ENCODE measurements at regions of chr10 and their contacts with region 1.

Region 1: DNA sequence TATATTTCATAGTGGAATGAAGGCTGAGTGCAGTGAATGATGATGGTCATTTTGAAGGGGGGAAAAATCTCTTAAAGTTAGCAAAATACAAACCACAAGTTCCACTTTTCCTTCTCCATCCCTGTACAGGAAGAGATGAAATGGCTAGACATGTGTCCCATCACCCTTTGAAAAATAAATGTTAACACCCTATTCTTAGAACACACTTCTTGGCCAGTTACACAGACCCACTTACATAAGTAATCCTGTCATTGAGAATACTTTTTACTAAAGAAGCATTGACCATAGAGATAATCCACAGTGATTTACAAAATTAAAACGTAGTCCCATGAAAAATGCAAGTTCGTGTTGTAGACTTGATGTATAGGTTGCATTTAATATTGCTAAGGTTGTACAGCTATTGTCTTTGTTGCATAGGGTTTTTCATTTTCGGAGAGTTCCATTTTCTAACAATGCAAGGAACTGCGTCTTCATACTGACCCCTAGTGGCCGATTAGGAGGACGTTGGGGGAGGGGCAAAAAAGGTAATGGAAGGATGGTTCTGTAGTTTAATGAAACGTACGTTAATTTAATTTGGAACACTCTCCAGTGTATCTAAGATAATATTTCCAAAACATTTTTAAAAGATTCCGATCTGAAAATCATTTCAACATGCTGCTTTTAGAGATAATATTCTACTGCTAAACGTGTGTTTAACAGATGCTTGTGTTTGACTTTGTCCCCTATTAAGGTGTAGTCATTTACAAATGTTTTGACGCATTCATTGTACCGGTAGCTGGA is 60.9 kb downstream of the ARMC3 start:
- DNase-seq: peak in 1 of 2 donors; percentile 71
- ATAC-seq: peak; percentile 58 to 88 (median 78)
- H3K4me3 ChIP-seq: peak overlapping the region in 2 of 10 donors; percentile 23 to 32
- H3K27ac ChIP-seq: no peak overlapping the region
- H3K4me1 ChIP-seq: peaks cover 0 to 13% (median 2%) of the 10 kb centered on the region in 9 donors
- H3K27me3 ChIP-seq: peaks cover 0 to 3% (median 0%) of the 10 kb centered on the region in 7 donors
- CTCF ChIP-seq: peak; percentile 80 to 96 (median 91)

Region 2: DNA sequence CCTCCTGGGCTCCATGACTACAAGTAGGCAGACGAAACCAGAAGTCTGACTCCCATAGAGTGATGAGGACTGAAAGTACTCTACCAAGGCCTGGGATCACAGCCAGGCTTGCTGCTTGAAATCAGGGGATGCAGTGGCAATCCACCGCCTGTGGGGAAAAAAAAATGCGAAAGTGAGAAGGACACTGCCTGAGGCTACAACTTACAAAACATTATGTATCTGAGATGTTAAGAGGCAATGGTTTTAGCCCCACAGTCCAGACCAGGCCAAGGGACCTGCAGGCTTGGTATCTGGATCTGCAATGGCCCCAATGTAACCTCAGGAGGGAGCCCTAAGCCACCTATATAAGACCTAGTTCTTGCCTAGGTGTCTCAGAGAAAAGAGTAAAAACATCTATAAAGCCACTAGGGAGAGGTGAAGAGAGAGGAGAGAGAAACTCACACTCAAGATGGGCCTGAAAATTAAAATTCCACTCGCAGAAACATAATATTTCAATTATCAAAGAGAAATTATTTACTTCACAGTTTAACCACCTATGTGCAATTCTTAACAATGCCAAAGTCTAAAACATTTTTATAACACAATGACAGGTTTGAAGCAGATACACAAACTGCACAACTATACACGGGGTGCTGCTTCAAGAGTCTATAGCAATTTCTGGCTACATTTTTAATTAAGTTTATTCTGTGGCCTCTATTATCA is 999.2 kb before region 1 on chr10:
- intact Hi-C with region 1: loop called in 3 of 10 experiments (anchors 1 to 5 kb)
- DNase-seq: peak; percentile 19 to 21
- ATAC-seq: peak; percentile 79 to 96 (median 90)
- H3K4me3 ChIP-seq: no peak overlapping the region
- H3K27ac ChIP-seq: no peak overlapping the region
- H3K4me1 ChIP-seq: peaks cover 0 to 13% (median 6%) of the 10 kb centered on the region in 9 donors
- H3K27me3 ChIP-seq: no peaks in the 10 kb centered on the region
- CTCF ChIP-seq: peak; percentile 10 to 66 (median 46)

Region 3: GRCh38 chr10:22010973-22011408 is 977.8 kb before region 1 on chr10:
- intact Hi-C with region 1: loop called (anchors 2 to 10 kb)
- DNase-seq: no peak
- ATAC-seq: no peak
- H3K4me3 ChIP-seq: no peak overlapping the region
- H3K27ac ChIP-seq: no peak overlapping the region
- H3K4me1 ChIP-seq: peaks cover 0 to 10% (median 0%) of the 10 kb centered on the region in 9 donors
- H3K27me3 ChIP-seq: no peaks in the 10 kb centered on the region
- CTCF ChIP-seq: peak; percentile 38 to 68 (median 61)

Region 4: GRCh38 chr10:22340362-22341189 is 648.2 kb before region 1 on chr10:
- intact Hi-C with region 1: loop called in 1 of 10 experiments (anchors 5 kb)
- DNase-seq: peak; percentile 66 to 72
- ATAC-seq: peak; percentile 84 to 92 (median 87)
- H3K4me3 ChIP-seq: peak overlapping the region; percentile 70 to 90 (median 82)
- H3K27ac ChIP-seq: peak overlapping the region; percentile 81 to 97 (median 95)
- H3K4me1 ChIP-seq: peaks cover 0 to 41% (median 25%) of the 10 kb centered on the region in 9 donors
- H3K27me3 ChIP-seq: peaks cover 24 to 94% (median 87%) of the 10 kb centered on the region in 7 donors
- CTCF ChIP-seq: peak in 1 of 9 donors; percentile 5

Region 5: GRCh38 chr10:22560913-22561239 is 427.9 kb before region 1 on chr10:
- intact Hi-C with region 1: loop called in 1 of 10 experiments (anchors 10 kb)
- DNase-seq: no peak
- ATAC-seq: no peak
- H3K4me3 ChIP-seq: no peak overlapping the region
- H3K27ac ChIP-seq: no peak overlapping the region
- H3K4me1 ChIP-seq: no peaks in the 10 kb centered on the region
- H3K27me3 ChIP-seq: no peaks in the 10 kb centered on the region
- CTCF ChIP-seq: no peak

Region 6: DNA sequence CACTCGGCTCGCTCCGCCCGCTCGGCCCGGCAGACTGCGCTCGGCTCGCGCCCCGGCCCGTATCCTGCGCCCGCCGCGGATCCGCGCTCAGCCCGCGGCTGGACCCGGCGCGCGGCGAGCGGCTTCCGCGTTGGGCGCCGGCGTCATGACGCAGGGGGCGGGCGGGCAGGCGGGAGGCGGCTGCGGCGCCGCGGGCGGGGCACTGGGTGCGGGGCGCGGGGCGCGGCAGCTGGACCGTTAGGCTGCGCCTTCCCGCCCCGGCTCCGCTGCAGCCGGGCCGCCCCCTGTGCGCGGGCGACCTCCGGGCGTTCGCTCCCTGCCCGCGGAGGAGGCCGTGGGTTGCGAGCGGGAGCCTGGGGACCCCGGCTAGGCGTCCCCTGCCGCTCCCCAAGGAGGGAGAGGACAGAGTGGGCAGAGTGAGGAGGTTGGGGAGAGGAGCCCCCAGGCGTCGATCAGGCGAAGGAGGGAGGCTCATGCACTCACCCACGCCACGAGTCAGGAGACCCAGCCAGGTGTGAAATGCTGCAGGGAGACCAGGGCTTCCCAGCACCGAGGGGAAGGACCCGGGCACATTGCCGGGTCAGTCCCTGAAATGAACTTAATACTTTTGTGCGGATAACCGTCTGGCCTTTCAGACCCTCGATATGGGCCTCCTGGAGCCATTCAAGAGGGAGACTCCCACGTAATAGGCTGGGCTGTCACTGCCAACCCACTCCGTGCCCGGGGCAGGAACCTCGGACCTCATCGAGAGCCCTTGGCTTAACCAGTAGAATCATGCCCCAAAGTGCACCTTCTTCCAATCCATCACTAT is 274.1 kb before region 1 on chr10 and contains the start of gene PIP4K2A:
- intact Hi-C with region 1: loop called in 3 of 10 experiments (anchors 5 to 10 kb)
- DNase-seq: peak; percentile 71 to 83
- ATAC-seq: peak; percentile 74 to 94 (median 86)
- H3K4me3 ChIP-seq: peak within 1 kb of the TSS; percentile 80 to 99 (median 94)
- H3K27ac ChIP-seq: peak within 1 kb of the TSS; percentile 77 to 95 (median 84)
- H3K4me1 ChIP-seq: peaks cover 0 to 37% (median 25%) of the 10 kb centered on the region in 9 donors
- H3K27me3 ChIP-seq: no peaks in the 10 kb centered on the region
- CTCF ChIP-seq: peak in 1 of 9 donors; percentile 7
- total RNA-seq, gene PIP4K2A: 8.8 to 29.1 (median 14.3) TPM

Region 7: DNA sequence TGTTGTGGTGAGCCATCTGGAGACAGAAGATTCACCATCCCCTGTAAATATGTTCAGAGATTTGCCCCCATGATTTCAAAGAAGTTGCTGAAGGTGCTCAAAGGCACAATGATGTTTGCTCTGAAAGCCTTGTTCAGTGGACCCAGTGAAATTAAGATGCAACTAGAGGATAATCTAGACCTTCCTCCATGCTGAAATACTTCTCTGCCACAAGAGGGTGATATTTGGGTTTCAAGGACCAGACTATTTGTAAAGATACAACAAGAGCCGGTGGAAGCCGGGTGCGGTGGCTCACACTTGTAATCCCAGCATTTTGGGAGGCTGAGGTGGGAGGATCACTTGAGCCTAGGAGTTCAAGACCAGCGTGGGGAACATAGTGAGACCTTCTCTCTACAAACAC is 93.1 kb after region 1 on chr10:
- intact Hi-C with region 1: no loop called
- DNase-seq: no peak
- ATAC-seq: peak in 1 of 8 donors; percentile 17
- H3K4me3 ChIP-seq: no peak overlapping the region
- H3K27ac ChIP-seq: no peak overlapping the region
- H3K4me1 ChIP-seq: peaks cover 0 to 9% (median 0%) of the 10 kb centered on the region in 9 donors
- H3K27me3 ChIP-seq: peaks cover 0 to 42% (median 14%) of the 10 kb centered on the region in 7 donors
- CTCF ChIP-seq: peak in 4 of 9 donors; percentile 18 to 35 (median 24)

Measured in heart right ventricle (tissue), 16 donors.